GM18951 (cell line): ENCODE measurements at regions of chrX and their contacts with region 1.

Region 1: DNA sequence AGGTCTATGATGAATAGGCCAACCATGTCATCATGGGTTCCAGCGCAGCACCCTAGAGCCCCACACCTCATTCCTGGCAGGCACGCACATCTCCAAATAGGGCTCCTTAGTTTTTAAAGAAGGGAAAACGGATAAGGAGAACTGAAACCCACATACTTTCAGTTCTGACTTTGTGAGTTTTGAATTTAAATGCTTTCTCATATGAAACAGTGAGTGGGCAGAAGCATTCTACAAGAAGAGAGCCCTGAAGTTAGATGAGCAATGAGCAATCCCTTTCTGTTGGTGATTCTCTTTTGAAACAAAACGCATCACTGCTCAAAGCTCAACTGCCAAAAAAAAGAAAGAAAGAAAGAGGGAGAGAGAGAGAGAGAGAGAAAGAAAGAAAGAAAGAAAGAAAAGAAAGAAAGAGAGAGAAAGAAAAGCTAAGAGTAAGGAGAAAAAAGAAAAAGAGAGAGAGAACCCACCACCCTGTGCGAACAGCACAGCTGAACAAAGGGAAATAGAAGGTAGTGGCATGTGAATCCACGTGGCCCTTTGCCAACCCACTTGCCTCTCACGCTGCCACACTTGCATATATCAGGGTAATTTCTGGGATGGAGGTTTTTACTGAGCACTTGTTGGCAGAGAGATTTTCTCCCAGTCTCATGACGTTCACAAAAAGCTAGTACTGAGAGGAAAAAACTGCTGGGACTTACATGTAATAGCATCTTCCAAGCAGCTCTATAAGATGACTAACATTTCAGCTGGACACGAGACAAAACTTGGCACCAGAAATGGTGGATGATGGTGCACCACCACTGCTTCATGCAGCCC is 31.0 kb downstream of the TMSB4X start:
- POLR2A ChIP-seq: peak; percentile 30

Region 2: GRCh38 chrX:12383196-12383595 is 622.7 kb before region 1 on chrX:
- in situ Hi-C with region 1: no loop called
- POLR2A ChIP-seq: no peak

Region 3: GRCh38 chrX:13078739-13079444 is 73.0 kb after region 1 on chrX:
- in situ Hi-C with region 1: loop called (anchors 10 kb)
- POLR2A ChIP-seq: no peak